Testis (tissue), 5 donors: ENCODE measurements at regions of chr1 and their contacts with region 1.

Region 1: DNA sequence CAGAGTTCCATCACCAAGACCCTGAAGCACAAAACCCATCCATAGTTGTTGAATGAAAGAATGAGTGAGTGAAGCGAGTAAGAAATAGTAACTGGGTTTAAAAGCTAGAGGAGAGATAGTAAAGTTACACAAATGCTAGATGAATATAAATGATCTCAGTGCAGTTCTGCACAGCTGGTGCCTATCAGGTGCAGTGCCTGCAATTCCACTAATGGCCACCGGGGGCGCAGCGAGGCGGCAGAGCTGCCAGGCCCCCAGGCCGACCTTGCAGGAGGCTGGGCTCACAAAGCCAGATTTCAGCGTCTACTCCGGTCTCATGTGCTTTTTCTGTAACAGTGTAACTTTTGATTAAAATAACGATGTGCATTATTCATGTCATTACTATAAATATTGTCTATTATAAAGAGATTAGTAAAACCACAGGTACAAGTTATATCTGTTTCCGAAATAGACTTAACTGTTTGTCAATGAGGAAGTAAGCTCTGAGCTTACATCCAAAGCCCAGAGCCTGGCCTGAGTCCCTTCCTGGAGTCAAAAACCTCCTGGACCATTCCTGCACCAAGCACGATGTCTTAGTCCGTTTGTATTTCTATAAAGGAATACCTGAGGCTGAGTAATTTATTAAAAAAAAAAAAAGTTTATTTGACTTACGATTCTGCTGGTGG is 477.6 kb downstream of the NPHP4 start:
- DNase-seq: peak; percentile 86
- H3K4me3 ChIP-seq: no peak overlapping the region
- H3K27ac ChIP-seq: no peak overlapping the region
- H3K4me1 ChIP-seq: peaks cover 4% of the 10 kb centered on the region
- H3K27me3 ChIP-seq: no peaks in the 10 kb centered on the region
- CTCF ChIP-seq: peak; percentile 94 to 100 (median 97)
- POLR2A ChIP-seq: no peak

Region 2: DNA sequence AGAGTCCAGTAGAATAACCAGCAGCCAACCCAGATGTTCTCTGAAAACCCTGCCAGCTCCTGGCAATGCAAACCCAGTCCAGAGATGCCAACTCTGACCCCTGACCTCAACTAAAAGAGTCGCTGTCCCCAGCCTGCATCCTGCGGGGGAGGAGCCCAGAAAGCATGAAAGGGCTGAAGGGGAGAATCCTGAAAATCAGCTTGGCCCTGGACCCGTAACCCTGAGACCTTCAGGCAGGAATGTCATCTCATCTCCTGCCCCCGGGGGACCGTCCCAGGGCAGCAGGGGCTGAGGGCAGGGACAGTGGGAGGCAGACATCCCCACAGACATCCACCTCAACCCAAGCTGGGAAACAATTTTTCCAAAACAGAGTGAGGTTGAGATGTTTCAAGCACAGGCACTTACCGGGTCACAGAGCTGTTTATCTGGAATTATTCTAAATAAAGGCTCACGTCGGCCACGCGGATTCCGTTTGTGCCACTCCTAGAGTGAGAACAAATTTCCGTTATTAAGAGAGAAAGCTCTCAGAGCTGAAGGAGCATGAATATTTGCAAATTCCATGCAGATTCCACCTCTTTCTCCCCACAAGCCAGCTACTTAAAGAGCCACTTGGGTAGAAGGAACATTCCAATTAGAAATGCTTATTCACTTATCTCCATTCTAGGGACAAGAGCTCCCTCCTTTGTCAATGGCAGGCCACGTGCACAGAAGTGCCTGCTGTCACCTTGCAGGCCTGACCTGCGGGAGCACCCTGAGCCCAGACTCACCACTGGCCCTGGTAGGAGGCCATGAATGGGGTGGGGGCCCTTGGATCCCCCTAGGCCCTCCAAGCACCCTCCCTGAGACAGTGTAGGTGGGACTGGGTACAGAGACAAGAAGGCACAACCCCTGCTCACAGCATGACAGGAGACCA is 237.4 kb after region 1 on chr1:
- intact Hi-C with region 1: loop called (anchors 10 kb)
- DNase-seq: no peak
- H3K4me3 ChIP-seq: no peak overlapping the region
- H3K27ac ChIP-seq: no peak overlapping the region
- H3K4me1 ChIP-seq: no peaks in the 10 kb centered on the region
- H3K27me3 ChIP-seq: no peaks in the 10 kb centered on the region
- CTCF ChIP-seq: no peak
- POLR2A ChIP-seq: no peak

Region 3: DNA sequence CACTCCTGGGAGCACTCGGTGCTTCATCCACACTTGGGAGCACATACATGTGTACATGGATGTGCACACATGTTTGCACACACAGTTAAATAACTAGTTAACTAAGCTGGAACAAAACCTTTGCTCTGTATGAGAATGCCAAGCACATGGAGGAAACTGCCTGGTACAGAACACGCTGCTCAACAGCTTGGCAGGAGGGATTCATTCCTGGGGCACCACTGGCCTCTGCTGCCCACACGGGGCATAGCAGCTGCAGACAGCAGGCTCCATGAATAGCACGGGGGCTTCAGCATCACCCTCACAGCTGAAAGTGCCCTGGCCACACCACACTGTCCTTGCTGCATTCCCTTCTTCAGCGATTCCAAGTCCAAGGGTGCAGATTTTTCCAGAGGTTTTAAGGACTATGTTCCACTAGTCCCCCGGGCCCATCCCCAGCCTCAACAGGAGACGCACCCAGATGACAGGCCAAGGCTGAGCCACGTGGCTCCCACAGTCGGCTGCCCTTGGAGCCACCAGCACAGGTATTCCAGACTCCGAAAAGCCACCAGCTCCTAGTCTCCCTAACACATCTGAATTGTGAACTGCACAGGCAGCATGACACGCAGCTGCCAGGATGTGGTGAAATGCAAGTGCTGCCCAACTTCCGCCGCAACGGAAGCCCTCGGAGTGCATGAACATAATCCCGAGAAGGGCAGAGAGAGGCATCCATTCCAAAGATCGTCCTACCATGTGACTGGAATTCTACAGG is 460.7 kb after region 1 on chr1:
- intact Hi-C with region 1: loop called (anchors 10 kb)
- DNase-seq: peak; percentile 65
- H3K4me3 ChIP-seq: no peak overlapping the region
- H3K27ac ChIP-seq: no peak overlapping the region
- H3K4me1 ChIP-seq: no peaks in the 10 kb centered on the region
- H3K27me3 ChIP-seq: no peaks in the 10 kb centered on the region
- CTCF ChIP-seq: peak; percentile 5 to 63 (median 58)
- POLR2A ChIP-seq: no peak